AG04449 (cell line): ENCODE measurements at regions of chr3 and their contacts with region 1.

Region 1: GRCh38 chr3:32143849-32144757 is 37.7 kb downstream of the GPD1L start:
- DNase-seq: peak; percentile 95
- H3K4me3 ChIP-seq: no peak overlapping the region
- CTCF ChIP-seq: peak; percentile 77

Region 2: DNA sequence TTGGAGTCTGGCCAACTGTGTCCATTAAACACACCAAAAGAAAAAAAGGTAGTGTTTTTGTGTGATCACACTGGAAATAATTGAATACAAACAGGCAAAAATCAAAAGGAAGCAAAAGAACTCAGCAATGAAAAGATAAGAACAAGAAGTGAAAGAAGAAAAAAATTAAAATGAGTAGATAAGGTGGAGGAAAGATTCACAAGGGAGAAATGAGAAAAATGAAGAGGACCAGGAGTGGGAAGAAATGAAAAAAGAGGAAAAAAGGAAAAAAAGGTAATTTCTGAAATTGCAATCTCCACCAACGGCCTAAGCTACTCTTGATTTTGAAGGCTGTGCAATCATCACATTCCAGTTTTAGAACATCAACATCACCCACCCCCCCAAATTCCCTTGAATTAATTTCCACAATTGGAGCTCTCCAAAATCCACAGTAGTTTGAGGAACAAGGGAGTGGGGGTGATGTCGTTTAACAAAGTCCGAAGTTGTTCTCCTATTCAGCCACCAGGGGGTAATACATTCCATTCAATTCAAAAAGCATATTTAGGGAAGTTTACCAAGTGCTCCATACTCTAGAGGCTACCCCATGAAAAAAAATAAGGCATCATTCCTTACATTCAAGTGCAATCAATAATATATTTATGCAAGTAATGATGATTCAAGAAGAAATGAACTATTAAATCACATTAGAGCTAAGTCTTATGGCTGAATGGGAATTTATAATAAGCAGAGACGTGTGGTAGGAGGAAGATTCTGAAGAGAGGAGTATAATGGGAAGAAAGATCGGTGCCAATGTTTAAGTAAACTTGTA is 125.1 kb before region 1 on chr3:
- CTCF ChIA-PET with region 1: interaction called, 29 read pairs
- POLR2A ChIA-PET with region 1: no interaction called
- DNase-seq: no peak
- H3K4me3 ChIP-seq: no peak overlapping the region
- CTCF ChIP-seq: peak; percentile 48

Region 3: GRCh38 chr3:32126305-32127015 is 17.6 kb before region 1 on chr3:
- CTCF ChIA-PET with region 1: interaction called, 18 read pairs
- POLR2A ChIA-PET with region 1: no interaction called
- DNase-seq: no peak
- H3K4me3 ChIP-seq: no peak overlapping the region
- CTCF ChIP-seq: no peak

Region 4: GRCh38 chr3:32154205-32154579 is 10.1 kb after region 1 on chr3:
- CTCF ChIA-PET with region 1: interaction called, 17 read pairs
- POLR2A ChIA-PET with region 1: no interaction called
- DNase-seq: no peak
- H3K4me3 ChIP-seq: no peak overlapping the region
- CTCF ChIP-seq: peak; percentile 25